ENCODE measurements at regions of chr6 and their contacts with region 1.

Region 1: GRCh38 chr6:1604158-1605030 is 5.3 kb upstream of the FOXC1 start:
- DNase-seq: peak in 1 of 2 donors; percentile 87
- H3K4me3 ChIP-seq: peak overlapping the region; percentile 79 to 94
- H3K27ac ChIP-seq: peak overlapping the region; percentile 97 to 99
- H3K4me1 ChIP-seq: peaks cover 0 to 10% of the 10 kb centered on the region in 2 donors
- H3K27me3 ChIP-seq: no peaks in the 10 kb centered on the region
- CTCF ChIP-seq: peak; percentile 85 to 99 (median 91)

Region 2: GRCh38 chr6:1554476-1555310 is 49.7 kb before region 1 on chr6:
- intact Hi-C with region 1: no loop called
- DNase-seq: peak in 1 of 2 donors; percentile 80
- H3K4me3 ChIP-seq: peak overlapping the region; percentile 51 to 76
- H3K27ac ChIP-seq: peak overlapping the region; percentile 69 to 82
- H3K4me1 ChIP-seq: peaks cover 0 to 3% of the 10 kb centered on the region in 2 donors
- H3K27me3 ChIP-seq: no peaks in the 10 kb centered on the region
- CTCF ChIP-seq: peak; percentile 63 to 87 (median 86)

Region 3: DNA sequence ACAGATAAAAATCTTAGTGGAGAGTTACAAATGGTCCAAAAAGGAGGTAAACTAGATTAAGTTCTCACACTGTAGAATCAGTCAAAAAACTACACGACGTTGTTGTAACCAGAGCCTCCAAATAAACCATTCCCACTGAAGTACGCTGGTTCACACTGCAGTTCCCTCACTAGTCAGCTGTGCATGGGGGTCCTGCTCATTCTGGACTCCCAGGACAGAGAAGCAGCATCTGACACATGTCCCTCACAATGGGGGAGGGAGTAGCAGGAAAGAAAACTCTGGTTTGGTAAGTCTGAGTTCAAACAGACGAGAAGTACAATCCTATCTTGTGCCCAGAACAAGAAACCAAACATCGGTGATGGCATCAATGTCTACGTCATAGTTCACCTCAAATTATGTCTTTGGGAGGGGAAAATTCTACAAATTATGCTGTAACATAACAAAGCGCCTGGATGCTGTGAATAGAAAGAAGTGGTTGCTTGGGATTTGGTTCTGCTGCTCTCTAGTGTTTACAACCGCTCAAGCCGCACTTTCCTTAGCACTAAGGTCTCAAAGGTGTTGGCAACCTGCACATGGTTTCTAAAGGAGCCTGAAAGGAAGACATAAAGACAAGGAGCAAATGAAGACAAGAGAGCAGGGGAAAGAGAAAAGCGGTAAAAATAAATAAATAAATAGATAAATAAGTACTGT is 433.0 kb after region 1 on chr6:
- intact Hi-C with region 1: loop called (anchors 5 kb)
- DNase-seq: no peak
- H3K4me3 ChIP-seq: no peak overlapping the region
- H3K27ac ChIP-seq: no peak overlapping the region
- H3K4me1 ChIP-seq: no peaks in the 10 kb centered on the region
- H3K27me3 ChIP-seq: no peaks in the 10 kb centered on the region
- CTCF ChIP-seq: peak in 2 of 3 experiments; percentile 35 to 54

Region 4: GRCh38 chr6:2103644-2104523 is 499.5 kb after region 1 on chr6:
- intact Hi-C with region 1: loop called (anchors 2 kb)
- DNase-seq: peak in 1 of 2 donors; percentile 83
- H3K4me3 ChIP-seq: peak overlapping the region; percentile 49 to 68
- H3K27ac ChIP-seq: peak overlapping the region; percentile 77 to 85
- H3K4me1 ChIP-seq: peaks cover 0 to 7% of the 10 kb centered on the region in 2 donors
- H3K27me3 ChIP-seq: no peaks in the 10 kb centered on the region
- CTCF ChIP-seq: peak; percentile 49 to 72 (median 53)

Region 5: GRCh38 chr6:2196079-2196679 is 591.8 kb after region 1 on chr6:
- intact Hi-C with region 1: loop called (anchors 2 kb)
- DNase-seq: no peak
- H3K4me3 ChIP-seq: no peak overlapping the region
- H3K27ac ChIP-seq: no peak overlapping the region
- H3K4me1 ChIP-seq: peaks cover 0 to 16% of the 10 kb centered on the region in 2 donors
- H3K27me3 ChIP-seq: no peaks in the 10 kb centered on the region
- CTCF ChIP-seq: peak; percentile 51 to 77 (median 75)

Region 6: GRCh38 chr6:2245094-2245876 is 640.9 kb after region 1 on chr6 and contains the start of gene GMDS:
- intact Hi-C with region 1: loop called (anchors 2 kb)
- DNase-seq: peak; percentile 56 to 93
- H3K4me3 ChIP-seq: peak within 1 kb of the TSS; percentile 86 to 95
- H3K27ac ChIP-seq: peak within 1 kb of the TSS; percentile 87 to 94
- H3K4me1 ChIP-seq: peaks cover 0 to 7% of the 10 kb centered on the region in 2 donors
- H3K27me3 ChIP-seq: no peaks in the 10 kb centered on the region
- CTCF ChIP-seq: no peak
- total RNA-seq, gene GMDS: 19.9 TPM

Region 7: GRCh38 chr6:2353412-2354137 is 749.2 kb after region 1 on chr6:
- intact Hi-C with region 1: loop called (anchors 2 kb)
- DNase-seq: peak; percentile 12 to 90
- H3K4me3 ChIP-seq: peak overlapping the region in 1 of 2 donors; percentile 14
- H3K27ac ChIP-seq: peak overlapping the region; percentile 80 to 90
- H3K4me1 ChIP-seq: peaks cover 4 to 25% of the 10 kb centered on the region in 2 donors
- H3K27me3 ChIP-seq: no peaks in the 10 kb centered on the region
- CTCF ChIP-seq: peak; percentile 56 to 73 (median 72)

Region 8: GRCh38 chr6:2448820-2449571 is 844.6 kb after region 1 on chr6:
- intact Hi-C with region 1: loop called (anchors 2 kb)
- DNase-seq: peak in 1 of 2 donors; percentile 76
- H3K4me3 ChIP-seq: peak overlapping the region; percentile 42 to 62
- H3K27ac ChIP-seq: peak overlapping the region; percentile 56 to 59
- H3K4me1 ChIP-seq: peaks cover 3 to 11% of the 10 kb centered on the region in 2 donors
- H3K27me3 ChIP-seq: no peaks in the 10 kb centered on the region
- CTCF ChIP-seq: peak; percentile 45 to 84 (median 76)

Measured in ascending aorta (tissue), 2 donors.